Naive thymus-derived CD4-positive, alpha-beta T cell (primary cell): ENCODE measurements at regions of chr5 and their contacts with region 1.

Region 1: GRCh38 chr5:176537608-176538504 is 654 bp upstream of the RNF44 start:
- DNase-seq: peak; percentile 80 to 99 (median 96)
- ATAC-seq: peak; percentile 83
- H3K4me3 ChIP-seq: peak overlapping the region; percentile 100
- H3K4me3 Mint-ChIP-seq: peak overlapping the region; percentile 96 to 100 (median 99)
- H3K27ac ChIP-seq: peak overlapping the region; percentile 96
- H3K27ac Mint-ChIP-seq: peak overlapping the region; percentile 99 to 100 (median 99)
- H3K4me1 ChIP-seq: peaks cover 57 to 63% of the 10 kb centered on the region in 2 donors
- H3K4me1 Mint-ChIP-seq: peaks cover 55 to 74% (median 71%) of the 10 kb centered on the region in 7 donors
- H3K27me3 ChIP-seq: no peaks in the 10 kb centered on the region
- H3K27me3 Mint-ChIP-seq: no peaks in the 10 kb centered on the region

Region 2: GRCh38 chr5:176361437-176362232 is 176.2 kb before region 1 on chr5 and contains the start of gene KIAA1191:
- CTCF ChIA-PET with region 1: interaction called, 3 read pairs
- POLR2A ChIA-PET with region 1: interaction called, 27 read pairs
- intact Hi-C with region 1: loop called (anchors 1 kb)
- DNase-seq: peak; percentile 80 to 96 (median 93)
- ATAC-seq: peak; percentile 96
- H3K4me3 ChIP-seq: peak within 1 kb of the TSS; percentile 82
- H3K4me3 Mint-ChIP-seq: peak within 1 kb of the TSS; percentile 93 to 99 (median 98)
- H3K27ac ChIP-seq: peak within 1 kb of the TSS; percentile 80
- H3K27ac Mint-ChIP-seq: peak within 1 kb of the TSS; percentile 91 to 99 (median 94)
- H3K4me1 ChIP-seq: peaks cover 19 to 24% of the 10 kb centered on the region in 2 donors
- H3K4me1 Mint-ChIP-seq: peaks cover 21 to 49% (median 38%) of the 10 kb centered on the region in 7 donors
- H3K27me3 ChIP-seq: no peaks in the 10 kb centered on the region
- H3K27me3 Mint-ChIP-seq: no peaks in the 10 kb centered on the region
- total RNA-seq, gene KIAA1191: 59.4 to 76.6 (median 65.9) TPM

Region 3: GRCh38 chr5:176447982-176448608 is 89.8 kb before region 1 on chr5 and contains the start of gene FAF2:
- CTCF ChIA-PET with region 1: interaction called, 9 read pairs
- POLR2A ChIA-PET with region 1: interaction called, 91 read pairs
- intact Hi-C with region 1: loop called (anchors 1 kb)
- DNase-seq: peak; percentile 97 to 100 (median 99)
- ATAC-seq: peak; percentile 97
- H3K4me3 ChIP-seq: peak within 1 kb of the TSS; percentile 99
- H3K4me3 Mint-ChIP-seq: peak within 1 kb of the TSS; percentile 92 to 99 (median 98)
- H3K27ac ChIP-seq: peak within 1 kb of the TSS; percentile 94
- H3K27ac Mint-ChIP-seq: peak within 1 kb of the TSS; percentile 81 to 99 (median 98)
- H3K4me1 ChIP-seq: peaks cover 22 to 23% of the 10 kb centered on the region in 2 donors
- H3K4me1 Mint-ChIP-seq: peaks cover 25 to 49% (median 40%) of the 10 kb centered on the region in 7 donors
- H3K27me3 ChIP-seq: no peaks in the 10 kb centered on the region
- H3K27me3 Mint-ChIP-seq: peaks cover 0 to 8% (median 0%) of the 10 kb centered on the region in 5 donors
- total RNA-seq, gene FAF2: 28.0 to 43.2 (median 31.2) TPM

Region 4: GRCh38 chr5:176573564-176574296 is 35.9 kb after region 1 on chr5:
- CTCF ChIA-PET with region 1: interaction called, 6 read pairs
- POLR2A ChIA-PET with region 1: interaction called, 5 read pairs
- intact Hi-C with region 1: loop called in 1 of 2 experiments (anchors 2 kb)
- DNase-seq: peak; percentile 48 to 80 (median 67)
- ATAC-seq: peak; percentile 88
- H3K4me3 ChIP-seq: no peak overlapping the region
- H3K4me3 Mint-ChIP-seq: no peak overlapping the region
- H3K27ac ChIP-seq: no peak overlapping the region
- H3K27ac Mint-ChIP-seq: peak overlapping the region in 1 of 9 donors; percentile 46
- H3K4me1 ChIP-seq: no peaks in the 10 kb centered on the region
- H3K4me1 Mint-ChIP-seq: peaks cover 0 to 11% (median 6%) of the 10 kb centered on the region in 7 donors
- H3K27me3 ChIP-seq: no peaks in the 10 kb centered on the region
- H3K27me3 Mint-ChIP-seq: peaks cover 0 to 4% (median 0%) of the 10 kb centered on the region in 5 donors

Region 5: GRCh38 chr5:176619203-176619568 is 81.3 kb after region 1 on chr5:
- CTCF ChIA-PET with region 1: no interaction called
- POLR2A ChIA-PET with region 1: no interaction called
- intact Hi-C with region 1: no loop called
- DNase-seq: peak; percentile 34 to 83 (median 63)
- ATAC-seq: peak; percentile 92
- H3K4me3 ChIP-seq: peak overlapping the region; percentile 13
- H3K4me3 Mint-ChIP-seq: peak overlapping the region; percentile 40 to 80 (median 60)
- H3K27ac ChIP-seq: no peak overlapping the region
- H3K27ac Mint-ChIP-seq: no peak overlapping the region
- H3K4me1 ChIP-seq: peaks cover 0 to 14% of the 10 kb centered on the region in 2 donors
- H3K4me1 Mint-ChIP-seq: peaks cover 8 to 23% (median 14%) of the 10 kb centered on the region in 7 donors
- H3K27me3 ChIP-seq: peaks cover 4 to 8% of the 10 kb centered on the region in 2 donors
- H3K27me3 Mint-ChIP-seq: peaks cover 46 to 85% (median 51%) of the 10 kb centered on the region in 5 donors

Region 6: GRCh38 chr5:177006265-177006972 is 468.6 kb after region 1 on chr5 and contains the start of gene UIMC1:
- CTCF ChIA-PET with region 1: no interaction called
- POLR2A ChIA-PET with region 1: no interaction called
- intact Hi-C with region 1: loop called in 1 of 2 experiments (anchors 1 kb)
- DNase-seq: peak; percentile 84 to 96 (median 89)
- ATAC-seq: peak; percentile 96
- H3K4me3 ChIP-seq: peak within 1 kb of the TSS; percentile 75
- H3K4me3 Mint-ChIP-seq: peak within 1 kb of the TSS; percentile 90 to 96 (median 94)
- H3K27ac ChIP-seq: peak within 1 kb of the TSS; percentile 85
- H3K27ac Mint-ChIP-seq: peak within 1 kb of the TSS; percentile 87 to 97 (median 93)
- H3K4me1 ChIP-seq: peaks cover 18% of the 10 kb centered on the region in 2 donors
- H3K4me1 Mint-ChIP-seq: peaks cover 14 to 35% (median 28%) of the 10 kb centered on the region in 7 donors
- H3K27me3 ChIP-seq: no peaks in the 10 kb centered on the region
- H3K27me3 Mint-ChIP-seq: no peaks in the 10 kb centered on the region
- total RNA-seq, gene UIMC1: 52.9 to 60.8 (median 59.9) TPM

Region 7: GRCh38 chr5:177303121-177303924 is 765.5 kb after region 1 on chr5 and contains the starts of genes PRELID1 and RAB24:
- CTCF ChIA-PET with region 1: no interaction called
- POLR2A ChIA-PET with region 1: no interaction called
- intact Hi-C with region 1: loop called in 1 of 2 experiments (anchors 10 kb)
- DNase-seq: peak; percentile 78 to 95 (median 85)
- ATAC-seq: peak; percentile 80
- H3K4me3 ChIP-seq: peak within 1 kb of the TSS; percentile 98
- H3K4me3 Mint-ChIP-seq: peak within 1 kb of the TSS; percentile 84 to 95 (median 88)
- H3K27ac ChIP-seq: peak within 1 kb of the TSS; percentile 78
- H3K27ac Mint-ChIP-seq: peak within 1 kb of the TSS; percentile 73 to 96 (median 90)
- H3K4me1 ChIP-seq: peaks cover 46 to 49% of the 10 kb centered on the region in 2 donors
- H3K4me1 Mint-ChIP-seq: peaks cover 52 to 76% (median 74%) of the 10 kb centered on the region in 7 donors
- H3K27me3 ChIP-seq: no peaks in the 10 kb centered on the region
- H3K27me3 Mint-ChIP-seq: no peaks in the 10 kb centered on the region
- total RNA-seq, gene PRELID1: 49.0 to 172 (median 57.2) TPM
- total RNA-seq, gene RAB24: 18.0 to 47.5 (median 24.3) TPM